Sigmoid colon (tissue), 7 donors: ENCODE measurements at regions of chr20 and their contacts with region 1.

Region 1: GRCh38 chr20:34704177-34705007 is at the start of gene TP53INP2:
- DNase-seq: peak; percentile 98
- H3K4me3 ChIP-seq: peak within 1 kb of the TSS; percentile 51 to 94 (median 90)
- H3K27ac ChIP-seq: peak within 1 kb of the TSS; percentile 99 to 100 (median 100)
- H3K4me1 ChIP-seq: peaks cover 0 to 31% (median 24%) of the 10 kb centered on the region in 4 donors
- H3K27me3 ChIP-seq: no peaks in the 10 kb centered on the region
- CTCF ChIP-seq: no peak
- EP300 ChIP-seq: peak in 2 of 4 donors; percentile 8 to 72
- POLR2A ChIP-seq: peak in 1 of 2 donors; percentile 22
- total RNA-seq, gene TP53INP2: 11.5 to 30.4 (median 28.4) TPM

Region 2: GRCh38 chr20:34312544-34313217 is 391.7 kb before region 1 on chr20:
- intact Hi-C with region 1: loop called (anchors 2 kb)
- DNase-seq: peak; percentile 91
- H3K4me3 ChIP-seq: peak overlapping the region in 2 of 4 donors; percentile 7 to 16
- H3K27ac ChIP-seq: no peak overlapping the region
- H3K4me1 ChIP-seq: peaks cover 0 to 13% (median 8%) of the 10 kb centered on the region in 4 donors
- H3K27me3 ChIP-seq: peaks cover 5 to 18% (median 13%) of the 10 kb centered on the region in 3 donors
- CTCF ChIP-seq: peak; percentile 99 to 100 (median 99)
- EP300 ChIP-seq: no peak
- POLR2A ChIP-seq: no peak

Region 3: DNA sequence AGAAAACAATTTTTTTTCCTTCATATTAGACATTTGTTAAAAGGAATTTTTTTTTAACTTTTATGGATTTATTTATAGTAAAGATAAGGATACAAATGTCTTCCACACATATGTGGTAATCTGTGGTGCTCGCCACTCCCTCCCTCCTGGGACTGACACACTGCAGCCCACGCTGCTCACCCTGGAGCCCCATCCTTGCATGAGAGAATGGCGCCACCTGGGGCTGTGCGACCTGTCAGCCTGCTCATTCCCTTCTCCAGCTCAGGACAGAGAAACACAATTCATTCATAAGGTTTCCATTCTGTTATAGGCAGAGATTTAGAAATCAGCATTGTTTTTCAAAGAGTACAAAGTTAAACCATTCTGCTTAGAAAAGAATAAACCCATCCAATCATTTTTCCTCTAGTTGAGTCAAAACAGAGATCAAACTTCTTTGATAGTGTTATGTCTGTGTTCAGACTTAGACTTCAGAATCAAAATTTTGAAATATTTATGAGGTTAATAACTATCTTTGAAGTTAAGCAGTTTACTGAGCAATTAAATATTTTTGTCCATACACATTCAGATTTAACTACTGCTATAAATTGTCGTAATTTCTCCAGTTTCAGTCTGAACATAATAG is 231.0 kb before region 1 on chr20:
- intact Hi-C with region 1: no loop called
- DNase-seq: no peak
- H3K4me3 ChIP-seq: no peak overlapping the region
- H3K27ac ChIP-seq: no peak overlapping the region
- H3K4me1 ChIP-seq: peaks cover 0 to 19% (median 9%) of the 10 kb centered on the region in 4 donors
- H3K27me3 ChIP-seq: no peaks in the 10 kb centered on the region
- CTCF ChIP-seq: no peak
- EP300 ChIP-seq: no peak
- POLR2A ChIP-seq: no peak

Region 4: DNA sequence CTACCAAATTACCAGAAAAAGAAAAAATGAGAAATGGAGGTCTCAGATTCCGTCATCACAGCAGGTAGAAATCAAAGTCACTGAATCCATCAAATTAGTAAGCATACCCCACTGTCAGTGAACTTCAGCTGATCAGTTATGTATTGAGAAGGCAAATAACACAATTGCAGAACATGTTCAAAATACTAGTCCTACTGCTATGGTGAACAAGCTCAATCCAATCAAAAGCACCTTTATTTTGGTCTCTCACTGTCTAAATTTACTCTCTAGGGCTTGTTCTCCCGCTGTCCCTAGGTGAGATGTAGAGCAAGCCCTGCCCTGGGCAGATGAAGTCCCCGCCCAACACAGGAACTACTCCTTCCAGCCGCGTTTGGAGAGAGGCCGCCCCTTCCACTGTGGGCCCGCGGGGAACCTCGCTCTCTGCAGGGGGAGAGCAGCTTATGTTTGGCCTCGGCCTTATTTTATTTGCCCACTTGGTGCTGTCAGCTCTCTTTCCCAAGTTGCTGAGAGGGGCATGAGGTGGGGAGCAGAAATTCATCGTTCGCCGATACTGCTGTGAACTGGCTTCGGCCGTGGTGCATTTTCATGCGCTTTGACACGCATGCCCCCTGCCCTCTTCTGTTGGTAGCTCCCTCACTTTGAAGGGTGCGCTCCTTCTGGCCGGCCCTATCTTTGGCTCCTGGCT is 160.1 kb before region 1 on chr20:
- intact Hi-C with region 1: loop called (anchors 5 kb)
- DNase-seq: no peak
- H3K4me3 ChIP-seq: peak overlapping the region in 1 of 4 donors; percentile 16
- H3K27ac ChIP-seq: no peak overlapping the region
- H3K4me1 ChIP-seq: peaks cover 0 to 7% (median 3%) of the 10 kb centered on the region in 4 donors
- H3K27me3 ChIP-seq: no peaks in the 10 kb centered on the region
- CTCF ChIP-seq: no peak
- EP300 ChIP-seq: no peak
- POLR2A ChIP-seq: no peak

Region 5: DNA sequence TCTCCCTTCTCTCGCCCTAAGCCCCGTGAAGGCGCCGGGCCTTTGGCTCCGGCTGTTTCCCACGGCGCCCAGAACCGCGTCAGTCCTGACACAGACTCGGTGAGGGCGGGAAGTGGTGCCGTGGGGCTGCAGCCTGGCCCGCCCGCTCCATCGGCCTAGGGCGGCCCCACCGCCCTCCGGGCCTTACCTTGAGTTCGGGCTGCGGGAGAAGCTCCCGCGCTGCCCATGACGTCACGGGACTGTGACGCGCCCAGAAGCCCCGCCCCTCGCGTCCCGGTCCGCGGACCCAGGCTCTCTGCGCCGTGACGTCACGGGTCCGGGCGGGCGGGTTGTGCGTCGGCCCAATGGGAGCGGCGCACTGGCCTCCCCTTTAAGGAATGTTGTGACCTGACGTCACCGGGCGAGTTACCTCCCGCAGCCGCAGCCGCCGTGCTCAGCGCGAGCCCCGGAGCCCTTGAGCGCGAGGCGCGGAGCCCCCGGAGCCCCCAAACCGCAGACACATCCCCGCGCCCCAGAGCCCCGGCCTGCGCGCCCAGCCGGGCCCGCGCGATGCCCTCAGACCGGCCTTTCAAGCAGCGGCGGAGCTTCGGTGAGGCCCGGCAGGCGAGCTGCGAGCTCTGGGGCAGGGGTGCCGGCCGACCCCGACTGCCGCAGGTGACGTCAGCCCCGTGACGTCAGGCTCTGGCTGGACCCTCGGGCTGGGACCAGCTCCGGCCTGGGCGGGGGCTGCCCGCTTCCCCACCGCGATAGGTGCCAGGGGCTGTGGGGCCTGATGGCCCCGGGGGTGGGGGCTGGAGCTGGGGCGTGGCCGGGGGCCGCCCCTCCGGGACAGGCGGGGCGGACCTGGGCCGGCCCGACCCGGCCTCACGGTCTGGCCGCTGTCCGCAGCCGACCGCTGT is 145.8 kb before region 1 on chr20 and contains the start of gene MAP1LC3A:
- intact Hi-C with region 1: loop called (anchors 1 kb)
- DNase-seq: peak; percentile 99
- H3K4me3 ChIP-seq: peak within 1 kb of the TSS; percentile 70 to 94 (median 86)
- H3K27ac ChIP-seq: peak within 1 kb of the TSS; percentile 93 to 98 (median 96)
- H3K4me1 ChIP-seq: peaks cover 0 to 20% (median 12%) of the 10 kb centered on the region in 4 donors
- H3K27me3 ChIP-seq: no peaks in the 10 kb centered on the region
- CTCF ChIP-seq: no peak
- EP300 ChIP-seq: no peak
- POLR2A ChIP-seq: peak in 1 of 2 donors; percentile 5
- total RNA-seq, gene MAP1LC3A: 51.0 to 88.1 (median 77.8) TPM

Region 6: DNA sequence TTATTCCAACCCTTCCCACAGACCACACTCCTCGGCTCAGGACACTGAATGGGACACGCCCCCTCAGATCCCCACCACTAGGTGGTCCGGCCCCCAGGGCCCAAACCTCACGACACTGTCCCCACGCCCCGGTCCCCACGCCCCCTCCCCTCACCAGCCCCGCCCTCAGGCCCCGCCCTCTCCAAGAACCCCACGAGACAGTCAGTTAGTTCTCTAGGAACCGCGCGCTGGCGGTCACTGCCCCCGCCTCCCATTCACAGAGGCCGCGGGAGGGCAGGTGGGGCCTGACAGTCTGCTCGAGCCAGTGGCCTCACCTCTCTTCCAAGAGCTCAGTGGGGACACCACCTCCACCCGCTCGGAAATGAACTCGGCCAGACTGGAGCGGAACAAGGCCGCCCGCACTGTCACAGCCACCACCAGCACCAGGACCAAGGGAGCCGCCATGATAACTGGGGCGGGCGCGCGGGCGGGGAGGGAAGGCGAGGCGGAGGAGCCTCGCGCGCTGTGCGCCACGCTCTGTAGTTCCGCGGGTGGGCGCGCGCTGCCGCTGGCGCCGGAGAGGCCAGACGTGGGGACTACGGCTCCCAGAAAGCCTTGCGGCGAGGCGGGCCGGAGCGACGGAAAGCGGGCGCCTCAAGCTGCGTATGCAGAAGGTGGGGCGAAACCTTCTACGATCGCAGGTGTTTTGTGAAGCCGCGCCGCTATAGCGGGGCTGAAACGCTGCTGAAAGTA is 27.6 kb before region 1 on chr20 and contains the start of gene PIGU:
- intact Hi-C with region 1: loop called (anchors 1 kb)
- DNase-seq: peak; percentile 96
- H3K4me3 ChIP-seq: peak within 1 kb of the TSS; percentile 73 to 80 (median 78)
- H3K27ac ChIP-seq: peak within 1 kb of the TSS; percentile 74 to 81 (median 78)
- H3K4me1 ChIP-seq: peaks cover 0 to 17% (median 11%) of the 10 kb centered on the region in 4 donors
- H3K27me3 ChIP-seq: no peaks in the 10 kb centered on the region
- CTCF ChIP-seq: peak in 1 of 4 experiments; percentile 4
- EP300 ChIP-seq: peak in 1 of 4 donors; percentile 8
- POLR2A ChIP-seq: peak; percentile 36 to 39
- total RNA-seq, gene PIGU: 6.9 to 13.8 (median 11.9) TPM

Region 7: GRCh38 chr20:34689486-34689885 is 14.9 kb before region 1 on chr20:
- intact Hi-C with region 1: no loop called
- DNase-seq: no peak
- H3K4me3 ChIP-seq: no peak overlapping the region
- H3K27ac ChIP-seq: no peak overlapping the region
- H3K4me1 ChIP-seq: no peaks in the 10 kb centered on the region
- H3K27me3 ChIP-seq: no peaks in the 10 kb centered on the region
- CTCF ChIP-seq: no peak
- EP300 ChIP-seq: no peak
- POLR2A ChIP-seq: no peak